ENCODE measurements at regions of chr4 and their contacts with region 1.

Region 1: GRCh38 chr4:147019061-147019460 is 73.4 kb upstream of the TTC29 start:
- DNase-seq: peak; percentile 74 to 79
- H3K4me3 ChIP-seq: no peak overlapping the region
- H3K27ac ChIP-seq: no peak overlapping the region
- H3K4me1 ChIP-seq: no peaks in the 10 kb centered on the region
- H3K27me3 ChIP-seq: no peaks in the 10 kb centered on the region
- CTCF ChIP-seq: peak; percentile 74 to 84

Region 2: GRCh38 chr4:146472404-146472803 is 546.7 kb before region 1 on chr4:
- intact Hi-C with region 1: no loop called
- DNase-seq: no peak
- H3K4me3 ChIP-seq: no peak overlapping the region
- H3K27ac ChIP-seq: no peak overlapping the region
- H3K4me1 ChIP-seq: no peaks in the 10 kb centered on the region
- H3K27me3 ChIP-seq: no peaks in the 10 kb centered on the region
- CTCF ChIP-seq: no peak

Region 3: GRCh38 chr4:147039976-147040575 is 21.0 kb after region 1 on chr4:
- intact Hi-C with region 1: no loop called
- DNase-seq: no peak
- H3K4me3 ChIP-seq: no peak overlapping the region
- H3K27ac ChIP-seq: no peak overlapping the region
- H3K4me1 ChIP-seq: no peaks in the 10 kb centered on the region
- H3K27me3 ChIP-seq: no peaks in the 10 kb centered on the region
- CTCF ChIP-seq: no peak

Region 4: GRCh38 chr4:147094237-147094636 is 75.2 kb after region 1 on chr4:
- intact Hi-C with region 1: loop called (anchors 5 kb)
- DNase-seq: no peak
- H3K4me3 ChIP-seq: no peak overlapping the region
- H3K27ac ChIP-seq: no peak overlapping the region
- H3K4me1 ChIP-seq: peaks cover 0 to 16% (median 0%) of the 10 kb centered on the region in 4 donors
- H3K27me3 ChIP-seq: no peaks in the 10 kb centered on the region
- CTCF ChIP-seq: no peak

Region 5: GRCh38 chr4:147182041-147182440 is 163.0 kb after region 1 on chr4:
- intact Hi-C with region 1: no loop called
- DNase-seq: no peak
- H3K4me3 ChIP-seq: no peak overlapping the region
- H3K27ac ChIP-seq: no peak overlapping the region
- H3K4me1 ChIP-seq: no peaks in the 10 kb centered on the region
- H3K27me3 ChIP-seq: no peaks in the 10 kb centered on the region
- CTCF ChIP-seq: no peak

Region 6: GRCh38 chr4:147590249-147590920 is 571.3 kb after region 1 on chr4:
- intact Hi-C with region 1: loop called (anchors 5 kb)
- DNase-seq: peak in 1 of 2 donors; percentile 68
- H3K4me3 ChIP-seq: no peak overlapping the region
- H3K27ac ChIP-seq: peak overlapping the region in 1 of 2 donors; percentile 36
- H3K4me1 ChIP-seq: peaks cover 0 to 37% (median 7%) of the 10 kb centered on the region in 4 donors
- H3K27me3 ChIP-seq: no peaks in the 10 kb centered on the region
- CTCF ChIP-seq: peak; percentile 77 to 86